SK-N-SH (cell line): ENCODE measurements at regions of chr1 and their contacts with region 1.

Region 1: DNA sequence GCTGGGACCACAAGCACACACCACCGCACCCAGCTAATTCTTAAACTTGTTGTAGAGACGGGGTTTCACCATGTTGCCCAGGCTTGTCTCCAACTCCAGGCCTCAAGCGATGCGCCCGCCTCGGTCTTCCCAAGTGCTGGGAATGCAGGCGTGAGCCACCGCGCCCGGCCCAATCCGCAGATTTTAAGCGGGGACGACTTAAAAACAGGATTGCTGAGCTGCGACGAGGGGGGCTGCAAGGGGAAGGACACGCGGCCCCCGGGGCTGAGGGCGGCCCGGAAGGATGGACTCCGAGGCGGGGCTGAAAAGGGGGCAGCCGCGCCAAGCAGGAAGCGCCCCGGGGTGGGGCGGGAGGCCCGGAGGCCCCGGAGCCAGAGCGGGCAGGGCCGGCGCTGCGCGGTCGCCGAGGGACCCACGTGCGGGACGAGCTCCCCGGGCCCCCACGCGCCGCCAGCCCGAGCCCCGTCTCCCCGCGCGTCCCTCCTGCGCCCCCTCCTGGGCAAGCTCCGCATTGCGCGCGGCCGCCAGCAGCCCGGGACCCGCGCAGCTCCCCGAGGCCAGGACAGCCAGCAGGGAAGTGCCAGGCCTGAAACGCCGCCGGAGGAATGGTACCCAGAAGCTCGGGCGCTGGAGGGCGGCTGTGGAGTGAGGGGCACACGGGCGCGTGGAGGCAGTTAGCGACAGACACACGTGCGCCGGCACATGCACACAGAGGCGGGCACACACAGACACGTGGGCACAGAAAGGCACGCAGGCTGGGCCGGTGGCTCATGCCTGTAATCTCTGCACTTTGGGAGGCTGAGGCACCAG is 5.5 kb upstream of the PRKCZ start:
- DNase-seq: peak; percentile 97
- H3K4me3 ChIP-seq: peak overlapping the region; percentile 15 to 41; a peak in 1 of 4 replicates
- H3K27ac ChIP-seq: no peak overlapping the region
- H3K4me1 ChIP-seq: peaks cover 0 to 6% of the 10 kb centered on the region in 2 experiments; a peak in 1 of 4 replicates
- H3K27me3 ChIP-seq: no peaks in the 10 kb centered on the region
- CTCF ChIP-seq: peak; percentile 58
- EP300 ChIP-seq: no peak
- RAD21 ChIP-seq: peak; percentile 71

Region 2: DNA sequence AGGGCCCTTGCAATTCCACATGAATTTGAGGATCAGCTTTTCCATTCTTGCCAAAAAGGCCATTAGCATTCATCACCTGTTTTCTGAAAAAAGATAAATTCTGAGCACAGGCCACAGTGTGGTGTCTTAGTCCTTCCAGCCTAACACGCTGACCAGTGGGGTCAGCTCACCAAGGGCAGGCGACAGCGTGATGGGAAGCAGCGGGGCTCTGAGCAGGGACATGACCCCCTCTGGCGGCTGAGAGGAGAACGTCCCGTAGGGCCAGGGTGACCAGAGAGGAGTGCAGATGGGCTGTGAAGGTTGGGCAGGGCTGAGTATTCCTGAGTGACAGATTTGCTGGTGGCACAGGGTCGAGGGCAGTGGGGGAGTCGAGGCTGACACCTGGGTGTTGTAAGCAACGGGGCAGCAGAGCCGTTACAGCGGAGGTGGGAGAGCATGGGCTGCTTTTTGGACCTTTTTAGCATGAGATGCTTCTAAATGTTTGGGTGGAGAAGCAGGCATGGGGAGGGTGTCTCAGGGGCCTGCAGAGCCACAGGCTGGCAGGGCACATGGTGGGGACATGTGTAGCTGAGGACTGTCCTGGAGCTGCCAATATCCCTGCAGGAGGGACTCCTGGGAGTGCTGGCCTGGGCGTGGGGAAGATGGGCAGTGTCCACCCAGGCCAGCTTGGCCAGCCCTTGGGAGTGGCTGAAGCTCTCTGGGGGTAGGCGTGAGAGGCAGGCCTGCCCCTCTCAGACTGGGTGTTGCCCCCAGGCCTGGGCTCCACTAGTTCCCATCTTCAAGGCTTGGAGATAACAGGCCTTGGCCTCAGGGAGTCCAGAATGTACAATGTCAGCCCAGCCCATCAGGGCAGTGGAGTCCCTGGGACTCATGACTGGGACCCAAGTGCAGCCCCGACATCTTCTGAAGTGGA is 138.3 kb before region 1 on chr1:
- CTCF ChIA-PET with region 1: interaction called, 22 read pairs
- POLR2A ChIA-PET with region 1: interaction called, 3 read pairs
- DNase-seq: peak; percentile 93
- H3K4me3 ChIP-seq: peak overlapping the region in 1 of 2 experiments; percentile 50; a peak in 1 of 4 replicates
- H3K27ac ChIP-seq: peak overlapping the region; percentile 27 to 36; a peak in 2 of 4 replicates
- H3K4me1 ChIP-seq: peaks cover 0 to 20% of the 10 kb centered on the region in 2 experiments; a peak in 2 of 4 replicates
- H3K27me3 ChIP-seq: no peaks in the 10 kb centered on the region
- CTCF ChIP-seq: peak; percentile 79
- EP300 ChIP-seq: no peak
- RAD21 ChIP-seq: peak; percentile 99

Region 3: GRCh38 chr1:1922956-1923833 is 121.5 kb before region 1 on chr1:
- CTCF ChIA-PET with region 1: interaction called, 13 read pairs
- POLR2A ChIA-PET with region 1: no interaction called
- DNase-seq: no peak
- H3K4me3 ChIP-seq: no peak overlapping the region
- H3K27ac ChIP-seq: no peak overlapping the region
- H3K4me1 ChIP-seq: peaks cover 0 to 13% of the 10 kb centered on the region in 2 experiments; a peak in 1 of 4 replicates
- H3K27me3 ChIP-seq: no peaks in the 10 kb centered on the region
- CTCF ChIP-seq: no peak
- EP300 ChIP-seq: no peak
- RAD21 ChIP-seq: no peak

Region 4: DNA sequence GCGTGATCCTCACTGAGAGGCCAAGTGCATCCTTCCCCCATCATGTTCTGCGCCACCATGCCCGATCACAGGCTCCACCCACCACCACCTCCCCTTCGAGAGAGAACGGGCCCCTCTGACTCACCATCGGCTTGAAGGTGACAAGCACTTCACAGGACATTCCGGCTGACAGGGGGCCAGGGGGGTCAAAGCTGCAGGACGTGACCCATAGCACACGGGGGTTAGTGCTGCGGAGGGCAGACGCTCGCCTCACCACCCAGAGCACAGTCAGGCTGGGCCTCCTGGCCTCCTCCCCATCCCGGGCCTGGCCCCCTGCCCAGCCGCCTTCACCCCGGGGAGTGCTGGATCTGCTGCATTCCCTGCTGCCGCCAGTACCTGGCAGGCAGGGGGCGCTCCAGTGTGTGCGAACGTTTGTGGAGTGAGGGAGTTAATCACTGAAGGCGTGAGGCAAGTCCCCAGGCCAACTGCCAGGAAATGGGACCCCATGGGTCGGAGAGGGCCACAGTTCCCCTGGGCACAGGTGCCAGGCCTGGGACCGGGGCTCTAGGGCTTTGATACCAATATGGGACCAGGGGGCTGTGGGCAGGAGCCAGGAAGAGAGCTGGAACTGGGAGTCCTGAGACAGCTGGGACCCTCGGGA is 84.8 kb before region 1 on chr1:
- CTCF ChIA-PET with region 1: interaction called, 268 read pairs
- POLR2A ChIA-PET with region 1: interaction called, 4 read pairs
- DNase-seq: peak; percentile 97
- H3K4me3 ChIP-seq: peak overlapping the region; percentile 4 to 48; a peak in 1 of 4 replicates
- H3K27ac ChIP-seq: no peak overlapping the region
- H3K4me1 ChIP-seq: peaks cover 0 to 5% of the 10 kb centered on the region in 2 experiments; a peak in 1 of 4 replicates
- H3K27me3 ChIP-seq: no peaks in the 10 kb centered on the region
- CTCF ChIP-seq: peak; percentile 73
- EP300 ChIP-seq: no peak
- RAD21 ChIP-seq: peak; percentile 78

Region 5: GRCh38 chr1:1973716-1974642 is 70.7 kb before region 1 on chr1:
- CTCF ChIA-PET with region 1: interaction called, 50 read pairs
- POLR2A ChIA-PET with region 1: no interaction called
- DNase-seq: no peak
- H3K4me3 ChIP-seq: no peak overlapping the region
- H3K27ac ChIP-seq: no peak overlapping the region
- H3K4me1 ChIP-seq: no peaks in the 10 kb centered on the region
- H3K27me3 ChIP-seq: no peaks in the 10 kb centered on the region
- CTCF ChIP-seq: no peak
- EP300 ChIP-seq: no peak
- RAD21 ChIP-seq: no peak

Region 6: GRCh38 chr1:2019172-2019543 is 25.6 kb before region 1 on chr1 and contains the start of gene GABRD:
- CTCF ChIA-PET with region 1: interaction called, 63 read pairs
- POLR2A ChIA-PET with region 1: no interaction called
- DNase-seq: peak; percentile 94
- H3K4me3 ChIP-seq: peak within 1 kb of the TSS in 1 of 2 experiments; percentile 33; a peak in 2 of 4 replicates
- H3K27ac ChIP-seq: no peak within 1 kb of the TSS
- H3K4me1 ChIP-seq: no peaks in the 10 kb centered on the region; a peak in 1 of 4 replicates
- H3K27me3 ChIP-seq: peaks cover 12% of the 10 kb centered on the region; the same call in 1 of the 2 replicates
- CTCF ChIP-seq: no peak
- EP300 ChIP-seq: no peak
- RAD21 ChIP-seq: no peak
- polyA plus RNA-seq, gene GABRD: 0.07 and 0.10 TPM in 2 replicates

Region 7: GRCh38 chr1:2072109-2072806 is 27.5 kb after region 1 on chr1:
- CTCF ChIA-PET with region 1: interaction called, 12 read pairs
- POLR2A ChIA-PET with region 1: no interaction called
- DNase-seq: no peak
- H3K4me3 ChIP-seq: no peak overlapping the region
- H3K27ac ChIP-seq: no peak overlapping the region
- H3K4me1 ChIP-seq: peaks cover 0 to 20% of the 10 kb centered on the region in 2 experiments; a peak in 1 of 4 replicates
- H3K27me3 ChIP-seq: no peaks in the 10 kb centered on the region
- CTCF ChIP-seq: no peak
- EP300 ChIP-seq: no peak
- RAD21 ChIP-seq: no peak

Region 8: DNA sequence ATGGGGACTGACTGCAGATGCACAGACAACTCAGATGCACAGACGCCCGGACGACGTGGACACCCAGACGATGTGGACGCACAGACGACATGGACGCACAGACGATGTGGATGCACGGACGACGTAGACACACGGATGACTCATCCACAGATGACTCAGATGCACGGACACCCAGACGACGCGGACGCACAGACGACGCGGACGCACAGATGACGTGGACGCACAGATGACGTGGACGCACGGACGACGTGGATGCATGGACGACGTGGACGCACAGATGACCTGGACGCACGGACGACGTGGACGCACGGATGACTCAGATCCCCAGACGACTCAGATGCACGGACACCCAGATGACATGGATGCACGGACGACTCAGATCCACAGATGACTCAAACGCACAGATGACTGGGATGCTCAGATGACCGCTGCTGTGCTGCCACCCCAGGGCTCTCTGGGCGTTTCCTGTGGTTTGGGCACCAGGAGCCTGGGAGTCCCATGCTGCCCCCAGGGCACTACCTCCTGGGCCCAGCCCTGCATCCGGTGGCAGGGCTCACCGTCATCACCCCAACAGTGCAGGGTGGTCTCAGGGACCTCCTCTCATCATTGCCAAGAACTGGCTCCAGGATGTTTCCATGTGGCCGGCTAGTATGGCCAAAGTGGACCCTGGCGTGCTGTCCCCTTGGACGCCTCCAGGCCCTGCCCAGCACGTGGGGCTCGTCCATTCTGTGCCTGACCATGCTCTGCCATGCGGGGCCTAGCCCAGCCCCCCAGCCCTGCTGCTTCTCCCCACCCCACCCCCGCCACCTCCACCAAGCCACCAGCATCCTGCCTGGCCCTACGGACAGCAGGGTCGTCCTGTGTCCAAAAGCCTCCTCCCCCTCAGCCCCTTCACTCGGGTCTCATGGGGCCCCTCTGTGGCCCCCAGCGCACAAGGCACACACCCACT is 135.9 kb after region 1 on chr1:
- CTCF ChIA-PET with region 1: no interaction called
- POLR2A ChIA-PET with region 1: no interaction called
- DNase-seq: no peak
- H3K4me3 ChIP-seq: no peak overlapping the region
- H3K27ac ChIP-seq: no peak overlapping the region
- H3K4me1 ChIP-seq: no peaks in the 10 kb centered on the region
- H3K27me3 ChIP-seq: no peaks in the 10 kb centered on the region
- CTCF ChIP-seq: no peak
- EP300 ChIP-seq: no peak
- RAD21 ChIP-seq: no peak

Region 9: GRCh38 chr1:2391041-2391930 is 346.6 kb after region 1 on chr1 and contains the starts of genes MORN1 and RER1:
- CTCF ChIA-PET with region 1: no interaction called
- POLR2A ChIA-PET with region 1: no interaction called
- DNase-seq: peak; percentile 99
- H3K4me3 ChIP-seq: peak within 1 kb of the TSS; percentile 88 to 97
- H3K27ac ChIP-seq: peak within 1 kb of the TSS; percentile 56 to 76; a peak in 3 of 4 replicates
- H3K4me1 ChIP-seq: peaks cover 0 to 24% of the 10 kb centered on the region in 2 experiments; a peak in 2 of 4 replicates
- H3K27me3 ChIP-seq: no peaks in the 10 kb centered on the region
- CTCF ChIP-seq: no peak
- EP300 ChIP-seq: no peak; a peak in 1 of 4 replicates
- RAD21 ChIP-seq: no peak
- polyA plus RNA-seq, gene MORN1: 13.7 and 16.3 TPM in 2 replicates
- polyA plus RNA-seq, gene RER1: 181 and 189 TPM in 2 replicates